ENCODE measurements at regions of chr12 and their contacts with region 1.

Region 1: DNA sequence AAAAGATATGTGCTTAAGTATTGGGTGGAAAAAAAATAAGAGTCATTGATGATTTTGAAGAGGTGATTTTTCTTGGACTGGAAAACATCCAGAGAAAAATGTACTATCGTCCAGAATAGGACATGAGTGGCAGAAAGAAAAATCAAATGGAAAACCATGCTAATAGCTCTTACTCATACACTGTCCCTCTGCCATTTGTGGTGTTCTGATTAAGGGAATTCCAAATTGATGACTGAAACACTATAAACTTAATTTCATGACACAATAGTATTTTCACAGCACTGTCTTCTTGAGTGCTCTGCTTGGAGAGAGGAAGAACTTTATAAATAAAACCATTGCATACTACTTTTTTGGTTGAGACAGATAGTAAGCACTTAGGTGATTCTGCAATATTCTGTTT is 72.4 kb downstream of the USP15 start:
- DNase-seq: peak; percentile 80
- H3K4me3 ChIP-seq: no peak overlapping the region
- H3K27me3 ChIP-seq: no peaks in the 10 kb centered on the region
- CTCF ChIP-seq: no peak

Region 2: GRCh38 chr12:62649412-62650138 is 317.0 kb after region 1 on chr12:
- CTCF ChIA-PET with region 1: no interaction called
- POLR2A ChIA-PET with region 1: interaction called, 12 read pairs
- DNase-seq: no peak
- H3K4me3 ChIP-seq: no peak overlapping the region
- H3K27me3 ChIP-seq: no peaks in the 10 kb centered on the region; the same call in 1 of the 2 replicates
- CTCF ChIP-seq: no peak

Region 3: GRCh38 chr12:63037746-63038718 is 705.4 kb after region 1 on chr12:
- CTCF ChIA-PET with region 1: no interaction called
- POLR2A ChIA-PET with region 1: no interaction called
- DNase-seq: no peak
- H3K4me3 ChIP-seq: no peak overlapping the region
- H3K27me3 ChIP-seq: no peaks in the 10 kb centered on the region
- CTCF ChIP-seq: no peak